Activated T-helper 1 cell treated with anti-CD3 and anti-CD28 coated beads, Interleukin-12 subunit alpha, Interleukin-12 subunit beta, Interleukin-2, Interleukin-4 antibody, amounts not matched to agents 30 ng/mL and 10 ng/mL and 1 ng/mL, durations not matched to agents 14 hours and 24 hours and 36 hours (primary cell): ENCODE measurements at regions of chr12 and their contacts with region 1.

Region 1: DNA sequence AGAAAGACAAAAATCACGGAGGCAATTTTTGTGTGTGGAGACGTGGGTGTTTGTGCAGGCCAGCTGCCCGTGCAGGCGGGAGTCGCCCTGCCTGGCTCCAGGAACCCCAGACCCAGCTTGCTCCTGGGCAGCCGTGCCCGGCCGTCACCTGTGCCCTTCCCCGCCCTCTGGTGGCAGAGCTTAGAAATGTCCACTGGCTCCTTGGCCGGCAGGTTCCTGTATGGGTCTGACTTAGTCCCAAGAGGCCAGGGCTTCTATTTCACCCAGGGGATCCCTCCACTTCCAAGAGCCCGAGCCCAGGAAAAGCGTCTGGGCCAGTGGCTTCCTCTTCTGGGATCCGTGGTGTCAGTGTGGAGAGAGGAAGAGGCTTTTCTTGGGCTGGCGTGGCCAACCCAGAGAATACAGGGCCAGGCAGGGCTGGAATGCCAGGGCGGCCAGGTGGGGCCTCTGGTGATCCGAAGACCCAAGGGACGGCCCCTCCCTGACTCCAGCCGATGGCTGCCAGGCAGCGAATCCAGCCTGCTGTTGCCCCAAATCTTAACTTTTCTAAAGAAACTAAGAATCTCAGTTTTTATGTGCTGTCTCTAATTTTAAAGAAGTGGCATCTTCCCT is 120.9 kb downstream of the TMEM132C start:
- DNase-seq: no peak
- H3K4me3 Mint-ChIP-seq: no peak overlapping the region
- H3K27ac Mint-ChIP-seq: no peak overlapping the region
- H3K4me1 Mint-ChIP-seq: no peaks in the 10 kb centered on the region
- H3K27me3 Mint-ChIP-seq: no peaks in the 10 kb centered on the region

Region 2: DNA sequence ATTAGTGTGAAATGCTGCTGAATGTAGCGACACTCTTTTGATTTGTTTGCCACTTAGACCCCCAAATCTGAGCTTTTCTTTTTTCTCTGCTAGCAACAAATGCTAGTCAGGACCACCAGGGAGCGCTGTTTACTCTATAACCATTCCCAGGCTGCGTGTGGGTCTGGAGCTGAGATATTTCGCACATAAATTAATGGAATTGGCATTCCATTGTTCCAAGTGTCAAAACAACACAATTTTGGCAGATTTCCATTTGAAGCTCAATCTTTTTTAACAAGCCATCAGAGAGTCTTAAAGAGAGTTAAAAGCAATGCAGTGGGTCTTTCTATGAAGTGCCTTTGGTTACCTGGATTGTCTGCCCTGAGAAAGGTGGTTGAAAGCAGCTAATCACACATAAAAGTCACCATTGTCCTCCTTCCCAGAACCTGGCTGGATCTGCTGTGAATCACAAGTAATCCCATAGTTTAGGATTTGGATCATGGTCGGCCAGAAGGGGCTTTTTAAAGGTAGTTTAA is 128.3 kb before region 1 on chr12:
- intact Hi-C with region 1: loop called (anchors 5 kb)
- DNase-seq: no peak
- H3K4me3 Mint-ChIP-seq: no peak overlapping the region
- H3K27ac Mint-ChIP-seq: no peak overlapping the region
- H3K4me1 Mint-ChIP-seq: no peaks in the 10 kb centered on the region
- H3K27me3 Mint-ChIP-seq: no peaks in the 10 kb centered on the region

Region 3: GRCh38 chr12:128408669-128409068 is 20.8 kb after region 1 on chr12:
- intact Hi-C with region 1: no loop called
- DNase-seq: no peak
- H3K4me3 Mint-ChIP-seq: no peak overlapping the region
- H3K27ac Mint-ChIP-seq: no peak overlapping the region
- H3K4me1 Mint-ChIP-seq: no peaks in the 10 kb centered on the region
- H3K27me3 Mint-ChIP-seq: no peaks in the 10 kb centered on the region